ENCODE measurements at regions of chr16 and their contacts with region 1.

Region 1: GRCh38 chr16:1705688-1706385 is at the start of gene MAPK8IP3:
- DNase-seq: peak; percentile 80 to 99 (median 91)
- ATAC-seq: peak; percentile 87 to 91 (median 88)
- H3K4me3 ChIP-seq: peak within 1 kb of the TSS; percentile 89 to 99
- H3K4me3 Mint-ChIP-seq: peak within 1 kb of the TSS; percentile 98 to 99 (median 99)
- H3K27ac ChIP-seq: peak within 1 kb of the TSS; percentile 72
- H3K27ac Mint-ChIP-seq: peak within 1 kb of the TSS; percentile 97
- H3K4me1 ChIP-seq: peaks cover 0 to 44% of the 10 kb centered on the region in 2 experiments
- H3K4me1 Mint-ChIP-seq: peaks cover 34 to 42% (median 39%) of the 10 kb centered on the region in 3 donors
- H3K27me3 ChIP-seq: no peaks in the 10 kb centered on the region
- H3K27me3 Mint-ChIP-seq: no peaks in the 10 kb centered on the region
- total RNA-seq, gene MAPK8IP3: 216 to 309 (median 290) TPM

Region 2: DNA sequence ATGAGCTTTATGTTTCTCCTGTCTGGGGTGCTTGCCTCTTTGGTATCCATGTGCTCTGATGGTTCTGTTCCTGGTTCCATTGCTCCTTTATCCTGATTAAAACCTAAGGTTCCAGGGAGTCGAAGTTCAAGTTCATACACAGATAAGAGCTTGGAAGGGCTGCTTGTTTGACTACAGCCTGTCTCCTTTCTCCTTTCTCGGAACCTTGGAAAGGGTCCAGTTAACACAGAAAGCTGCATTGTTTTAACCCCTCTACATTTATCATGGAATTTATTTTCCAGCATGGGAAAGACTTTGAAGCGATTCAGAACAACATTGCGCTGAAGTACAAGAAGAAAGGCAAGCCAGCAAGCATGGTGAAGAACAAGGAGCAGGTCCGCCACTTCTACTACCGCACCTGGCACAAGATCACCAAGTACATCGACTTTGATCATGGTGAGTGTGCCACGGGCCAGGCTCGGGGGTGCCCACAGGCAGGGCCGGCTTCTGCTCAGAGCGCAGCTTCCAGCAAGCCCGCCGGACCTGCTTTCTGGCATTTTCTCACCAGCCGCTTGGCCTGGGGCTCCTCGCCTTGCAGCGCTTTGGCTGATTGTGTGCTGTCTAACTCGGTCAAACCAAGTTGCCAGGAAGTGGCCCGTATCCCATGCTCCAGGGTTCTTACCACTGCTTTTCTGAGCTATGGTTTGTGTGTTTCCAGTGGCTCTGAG is 73.8 kb before region 1 on chr16:
- CTCF ChIA-PET with region 1: no interaction called
- POLR2A ChIA-PET with region 1: no interaction called
- DNase-seq: no peak
- ATAC-seq: no peak
- H3K4me3 ChIP-seq: no peak overlapping the region
- H3K4me3 Mint-ChIP-seq: no peak overlapping the region
- H3K27ac ChIP-seq: no peak overlapping the region
- H3K27ac Mint-ChIP-seq: no peak overlapping the region
- H3K4me1 ChIP-seq: no peaks in the 10 kb centered on the region
- H3K4me1 Mint-ChIP-seq: peaks cover 4 to 17% (median 8%) of the 10 kb centered on the region in 3 donors
- H3K27me3 ChIP-seq: no peaks in the 10 kb centered on the region
- H3K27me3 Mint-ChIP-seq: no peaks in the 10 kb centered on the region

Region 3: DNA sequence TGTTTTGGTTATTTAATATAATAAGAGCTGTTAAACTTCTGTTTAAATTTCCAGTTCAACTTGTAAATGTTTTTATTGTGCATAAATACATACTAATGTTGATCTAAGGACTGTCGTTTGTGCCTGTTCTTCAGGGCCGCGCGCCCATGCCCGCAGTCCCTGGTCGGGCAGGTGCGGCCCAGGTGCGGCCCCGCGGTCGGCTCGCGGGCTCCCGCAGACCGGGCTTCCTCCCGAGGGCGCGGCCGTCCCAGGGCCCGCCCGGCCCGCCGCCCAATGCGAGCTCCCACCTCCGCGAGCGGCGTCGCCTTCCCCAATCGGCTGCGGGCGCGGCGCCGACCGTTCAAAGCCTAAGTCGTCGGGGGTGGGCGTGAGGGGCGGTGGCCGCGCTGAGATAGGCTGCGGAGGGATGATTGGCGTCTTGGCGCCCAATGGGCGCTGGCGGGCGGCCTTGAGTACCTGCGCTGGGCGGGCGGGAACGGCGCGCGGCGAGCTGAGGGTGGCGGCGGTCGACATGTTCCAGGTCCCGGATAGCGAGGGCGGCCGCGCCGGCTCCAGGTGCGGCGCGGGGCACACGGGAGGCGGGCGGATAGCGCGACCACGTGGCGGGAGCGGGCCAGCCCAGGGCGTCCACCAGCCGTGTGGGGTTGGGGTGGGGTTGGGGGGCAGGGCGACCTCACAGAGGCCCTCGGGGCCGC is 27.9 kb before region 1 on chr16 and contains the start of gene JPT2:
- CTCF ChIA-PET with region 1: interaction called in 1 of 2 experiments, 15 read pairs
- POLR2A ChIA-PET with region 1: interaction called in 1 of 2 experiments, 3 read pairs
- DNase-seq: peak; percentile 91 to 97 (median 94)
- ATAC-seq: peak; percentile 96 to 98 (median 97)
- H3K4me3 ChIP-seq: peak within 1 kb of the TSS; percentile 57 to 69
- H3K4me3 Mint-ChIP-seq: peak within 1 kb of the TSS; percentile 86 to 87 (median 86)
- H3K27ac ChIP-seq: peak within 1 kb of the TSS; percentile 4
- H3K27ac Mint-ChIP-seq: peak within 1 kb of the TSS; percentile 72 to 78
- H3K4me1 ChIP-seq: peaks cover 3 to 22% of the 10 kb centered on the region in 2 experiments
- H3K4me1 Mint-ChIP-seq: peaks cover 36 to 39% (median 39%) of the 10 kb centered on the region in 3 donors
- H3K27me3 ChIP-seq: no peaks in the 10 kb centered on the region
- H3K27me3 Mint-ChIP-seq: no peaks in the 10 kb centered on the region
- total RNA-seq, gene JPT2: 13.8 to 51.1 (median 41.3) TPM

Region 4: DNA sequence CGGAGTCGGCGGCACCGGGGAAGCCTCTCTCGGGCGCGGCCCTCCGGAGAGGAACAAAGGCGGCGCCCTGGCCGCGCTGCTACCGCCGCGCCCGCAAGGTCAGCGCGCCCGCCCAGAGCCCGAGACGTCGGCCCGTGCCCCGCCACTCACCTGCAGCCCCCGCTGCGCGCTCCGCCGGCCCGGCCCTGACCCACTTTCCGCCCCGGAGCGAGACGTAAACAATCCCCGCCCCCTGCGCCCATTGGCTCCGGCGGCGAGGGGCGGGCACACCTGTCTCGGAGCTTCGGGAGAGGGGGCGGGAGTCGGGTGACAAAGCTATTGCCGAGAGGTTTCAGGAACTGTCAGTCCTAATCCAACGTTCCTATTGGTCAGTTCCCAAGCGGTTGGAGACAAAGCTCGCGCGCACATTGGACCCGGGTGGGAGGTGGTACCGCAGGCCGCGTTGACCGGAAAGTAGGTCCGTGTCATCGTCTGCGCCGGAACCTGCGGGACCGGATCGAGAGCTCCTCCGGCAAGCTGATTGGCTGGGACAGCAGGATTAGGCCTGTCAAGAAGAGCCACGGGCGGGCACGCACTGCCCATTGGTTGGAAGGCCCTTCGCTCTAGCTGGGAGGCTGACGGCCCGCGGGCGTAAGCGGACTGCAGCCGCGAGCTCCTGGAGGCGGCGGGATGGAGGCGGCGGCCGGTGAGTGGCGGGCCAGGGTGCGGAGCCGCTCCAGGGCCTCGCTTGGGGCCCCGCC is 76.7 kb after region 1 on chr16 and contains the starts of genes NUBP2 and SPSB3:
- CTCF ChIA-PET with region 1: interaction called in 1 of 2 experiments, 16 read pairs
- POLR2A ChIA-PET with region 1: interaction called in 1 of 2 experiments, 3 read pairs
- DNase-seq: peak; percentile 87 to 99 (median 94)
- ATAC-seq: peak; percentile 87 to 88 (median 87)
- H3K4me3 ChIP-seq: peak within 1 kb of the TSS; percentile 72 to 73
- H3K4me3 Mint-ChIP-seq: peak within 1 kb of the TSS; percentile 75 to 91 (median 89)
- H3K27ac ChIP-seq: peak within 1 kb of the TSS; percentile 57
- H3K27ac Mint-ChIP-seq: peak within 1 kb of the TSS; percentile 86 to 88
- H3K4me1 ChIP-seq: peaks cover 2 to 70% of the 10 kb centered on the region in 2 experiments
- H3K4me1 Mint-ChIP-seq: peaks cover 10 to 44% (median 34%) of the 10 kb centered on the region in 3 donors
- H3K27me3 ChIP-seq: no peaks in the 10 kb centered on the region
- H3K27me3 Mint-ChIP-seq: no peaks in the 10 kb centered on the region
- total RNA-seq, gene NUBP2: 41.2 to 77.0 (median 74.3) TPM
- total RNA-seq, gene SPSB3: 67.3 to 162 (median 139) TPM

Measured in T-cell (primary cell).